PC-3 (cell line): ENCODE measurements at regions of chr19 and their contacts with region 1.

Region 1: DNA sequence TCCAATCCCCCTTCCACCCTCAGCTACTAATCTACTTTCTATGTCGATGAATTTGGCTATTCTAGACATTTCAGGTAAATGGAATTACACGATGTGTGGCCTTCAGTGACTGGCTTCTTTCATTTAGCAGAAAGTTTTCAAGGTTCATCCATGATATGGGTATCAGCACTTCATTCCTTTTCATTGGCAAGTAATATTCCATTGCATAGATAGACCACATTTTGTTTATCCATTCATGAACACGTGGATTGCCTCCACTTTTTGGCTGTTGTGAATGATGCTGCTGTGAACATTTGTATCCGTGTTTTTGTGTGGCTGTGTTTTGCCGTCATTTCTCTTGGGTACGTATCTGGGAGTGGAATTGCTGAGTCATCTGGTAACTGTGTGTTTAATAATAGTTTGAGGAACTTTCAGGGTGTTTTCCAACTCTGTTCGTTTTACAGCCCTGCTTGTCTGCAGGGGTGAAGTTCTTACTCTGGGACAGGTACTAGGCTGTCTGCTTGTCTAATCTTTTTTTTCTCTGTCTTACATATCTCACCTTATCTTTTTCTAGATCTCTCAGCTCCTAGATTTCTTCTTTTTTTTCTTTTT is 32.5 kb downstream of the MARK4 start:
- DNase-seq: no peak
- ATAC-seq: no peak
- H3K4me3 ChIP-seq: no peak overlapping the region
- H3K27ac ChIP-seq: no peak overlapping the region
- H3K4me1 ChIP-seq: no peaks in the 10 kb centered on the region
- H3K27me3 ChIP-seq: no peaks in the 10 kb centered on the region
- CTCF ChIP-seq: no peak

Region 2: DNA sequence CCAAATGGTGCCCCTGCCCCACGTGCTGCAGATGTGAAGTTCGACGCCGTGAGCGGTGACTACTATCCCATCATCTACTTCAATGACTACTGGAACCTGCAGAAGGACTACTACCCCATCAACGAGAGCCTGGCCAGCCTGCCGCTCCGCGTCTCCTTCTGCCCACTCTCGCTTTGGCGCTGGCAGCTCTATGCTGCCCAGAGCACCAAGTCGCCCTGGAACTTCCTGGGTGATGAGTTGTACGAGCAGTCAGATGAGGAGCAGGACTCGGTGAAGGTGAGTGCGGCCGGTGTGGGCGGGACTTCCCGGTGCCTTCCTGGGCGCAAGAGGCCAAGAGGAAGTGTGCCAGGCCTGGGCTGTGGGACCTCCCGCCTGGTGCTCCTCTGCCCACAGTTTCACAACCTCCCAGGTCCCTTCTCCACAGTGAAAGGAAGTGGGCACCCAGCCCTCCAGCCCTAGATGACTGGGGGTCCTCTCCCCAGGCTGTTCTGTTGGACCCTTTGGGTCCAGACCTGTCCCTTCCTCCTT is 296.3 kb before region 1 on chr19:
- CTCF ChIA-PET with region 1: no interaction called
- POLR2A ChIA-PET with region 1: no interaction called
- intact Hi-C with region 1: no loop called
- DNase-seq: no peak
- ATAC-seq: no peak
- H3K4me3 ChIP-seq: no peak overlapping the region
- H3K27ac ChIP-seq: no peak overlapping the region
- H3K4me1 ChIP-seq: no peaks in the 10 kb centered on the region
- H3K27me3 ChIP-seq: no peaks in the 10 kb centered on the region
- CTCF ChIP-seq: no peak

Region 3: DNA sequence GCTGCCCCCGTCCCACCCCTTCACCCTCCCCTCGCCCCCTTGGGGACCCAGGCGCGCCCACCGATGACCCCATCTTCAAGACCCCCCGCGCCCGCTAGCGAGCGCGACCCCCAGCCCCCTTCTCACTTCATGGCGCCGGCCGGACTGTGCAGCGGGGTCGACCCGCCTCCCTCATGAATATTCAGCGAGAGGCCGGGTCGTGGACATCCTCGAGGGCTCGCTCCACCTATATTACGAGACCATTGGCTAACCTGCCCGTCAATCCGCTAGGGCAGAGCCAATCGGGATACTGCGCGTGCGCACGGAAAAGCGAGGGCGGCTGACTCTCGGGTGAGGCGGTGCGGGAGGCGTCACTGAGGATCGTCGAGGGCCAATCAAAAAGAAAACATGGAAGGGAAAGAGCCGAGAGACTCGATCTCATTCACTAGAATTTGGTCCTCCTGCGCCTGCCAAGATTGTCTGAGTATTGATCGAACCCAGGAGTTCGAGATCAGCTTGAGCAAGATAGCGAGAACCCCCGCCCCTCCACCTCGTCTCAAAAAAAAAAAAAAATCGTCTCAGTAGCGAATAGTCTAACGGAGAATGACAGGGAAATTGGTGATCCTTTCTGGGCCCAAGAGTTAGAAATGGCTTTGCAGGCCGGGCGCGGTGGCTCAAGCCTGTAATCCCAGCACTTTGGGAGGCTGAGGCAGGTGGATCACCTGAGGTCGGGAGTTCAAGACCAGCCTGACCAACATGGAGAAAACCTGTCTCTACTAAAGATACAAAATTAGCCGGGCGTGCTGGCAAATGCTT is 87.1 kb after region 1 on chr19 and contains the start of gene ERCC2:
- CTCF ChIA-PET with region 1: no interaction called
- POLR2A ChIA-PET with region 1: interaction called, 11 read pairs
- intact Hi-C with region 1: no loop called
- DNase-seq: peak; percentile 98
- ATAC-seq: peak; percentile 98
- H3K4me3 ChIP-seq: peak within 1 kb of the TSS; percentile 94
- H3K27ac ChIP-seq: peak within 1 kb of the TSS; percentile 30; the same call in 1 of the 2 replicates
- H3K4me1 ChIP-seq: peaks cover 7% of the 10 kb centered on the region
- H3K27me3 ChIP-seq: no peaks in the 10 kb centered on the region
- CTCF ChIP-seq: no peak
- total RNA-seq, gene ERCC2: 48.0 and 57.5 TPM in 2 replicates